ENCODE measurements at regions of chr16 and their contacts with region 1.

Region 1: DNA sequence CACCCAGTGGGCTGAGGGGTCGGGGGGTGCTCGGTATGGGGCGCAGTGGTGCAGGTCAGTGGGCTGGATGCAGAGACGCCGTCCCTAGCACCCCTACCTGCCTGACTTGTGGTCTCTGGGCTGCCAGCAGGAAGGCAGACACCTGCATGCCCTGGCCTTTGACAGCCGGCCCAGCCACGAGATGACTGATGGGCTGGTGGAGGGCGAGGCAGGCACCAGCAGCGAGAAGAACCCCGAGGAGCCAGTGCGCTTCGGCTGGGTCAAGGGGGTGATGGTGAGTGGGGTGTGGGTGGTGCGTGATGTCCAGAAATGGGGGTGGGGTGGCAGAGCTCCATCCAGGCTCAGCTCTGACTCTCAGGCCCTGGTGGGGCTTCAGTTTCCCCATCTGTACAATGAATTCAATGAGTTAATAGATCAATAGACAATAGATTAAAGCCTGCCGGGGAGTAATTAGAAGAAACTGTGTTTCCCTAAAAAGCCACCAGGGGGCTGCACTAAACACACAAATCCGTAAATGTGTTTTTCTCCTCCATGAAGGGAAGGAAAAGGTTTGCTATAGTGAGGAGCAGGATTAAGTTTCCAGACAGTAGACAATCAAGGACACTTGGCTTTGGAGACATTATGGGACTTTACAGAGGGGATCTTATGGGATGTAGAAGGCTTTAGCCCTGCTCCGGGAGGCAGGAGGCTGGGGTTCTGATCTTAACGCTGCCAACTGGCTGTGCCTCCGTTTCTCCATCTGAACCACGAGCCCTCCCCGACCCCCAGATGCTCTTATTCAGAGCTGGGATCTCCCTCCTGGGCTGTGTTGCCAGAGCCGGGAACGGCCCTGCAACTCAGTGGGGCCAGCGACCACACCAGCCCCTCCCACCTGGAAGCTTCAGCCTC is 2.2 kb downstream of the SLC12A3 start:
- DNase-seq: peak; percentile 80
- H3K4me3 ChIP-seq: no peak overlapping the region
- H3K27ac ChIP-seq: no peak overlapping the region
- H3K4me1 ChIP-seq: 0 out of 2 replicates have a peak, but pooled peaks cover 4% of the 10 kb centered on the region
- H3K27me3 ChIP-seq: no peaks in the 10 kb centered on the region

Region 2: DNA sequence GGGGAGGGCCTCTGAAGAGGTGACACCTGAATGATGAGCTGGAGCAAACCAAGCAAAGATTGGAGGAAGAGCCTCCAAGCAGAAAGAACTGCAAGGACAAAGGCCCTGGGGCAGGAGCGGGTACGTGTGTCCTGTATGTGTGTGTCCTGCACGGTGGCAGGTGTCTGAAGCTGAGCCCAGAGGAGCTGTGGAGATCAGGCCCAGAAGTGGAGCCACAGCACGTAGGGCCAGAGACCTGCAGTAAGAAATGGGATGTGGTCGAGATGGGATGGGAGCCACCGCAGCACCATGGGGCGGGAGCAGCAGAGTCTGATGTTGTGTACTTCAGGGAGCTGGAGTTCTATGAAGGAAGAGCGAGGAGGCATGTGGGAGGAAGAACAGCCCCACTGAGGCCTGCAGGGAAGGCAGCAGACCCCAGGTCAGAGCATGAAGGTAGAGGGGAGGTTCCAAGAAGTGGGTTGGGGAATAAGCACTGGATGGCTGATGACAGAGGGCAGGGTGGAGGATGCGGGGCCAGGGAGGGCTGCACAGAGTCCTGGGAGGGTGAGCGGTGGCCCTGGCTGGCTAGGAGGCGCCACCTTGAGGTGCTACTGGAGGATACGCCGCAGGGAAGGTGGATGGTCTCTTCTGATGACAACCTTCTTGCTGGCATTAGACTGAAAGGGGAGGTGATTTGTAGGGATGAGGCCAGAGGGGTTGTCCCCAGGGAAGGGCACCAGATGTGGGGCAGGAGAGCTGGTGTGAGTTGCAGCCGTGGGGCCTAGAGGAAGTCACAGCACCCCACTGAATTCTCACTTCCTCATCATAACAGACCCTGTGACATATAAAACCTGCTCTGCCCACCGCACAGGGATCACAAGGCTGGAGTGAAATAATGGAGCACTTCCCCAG is 83.9 kb after region 1 on chr16:
- in situ Hi-C with region 1: loop called (anchors 10 kb)
- DNase-seq: peak; percentile 83
- H3K4me3 ChIP-seq: no peak overlapping the region
- H3K27ac ChIP-seq: no peak overlapping the region
- H3K4me1 ChIP-seq: no peaks in the 10 kb centered on the region
- H3K27me3 ChIP-seq: no peaks in the 10 kb centered on the region

Region 3: GRCh38 chr16:57039148-57039812 is 172.1 kb after region 1 on chr16:
- in situ Hi-C with region 1: loop called (anchors 10 kb)
- DNase-seq: peak; percentile 58
- H3K4me3 ChIP-seq: no peak overlapping the region
- H3K27ac ChIP-seq: peak overlapping the region; percentile 41
- H3K4me1 ChIP-seq: peaks cover 25% of the 10 kb centered on the region
- H3K27me3 ChIP-seq: no peaks in the 10 kb centered on the region

Region 4: GRCh38 chr16:57049678-57050077 is 182.5 kb after region 1 on chr16:
- in situ Hi-C with region 1: no loop called
- DNase-seq: no peak
- H3K4me3 ChIP-seq: no peak overlapping the region
- H3K27ac ChIP-seq: no peak overlapping the region
- H3K4me1 ChIP-seq: no peaks in the 10 kb centered on the region
- H3K27me3 ChIP-seq: no peaks in the 10 kb centered on the region

Region 5: DNA sequence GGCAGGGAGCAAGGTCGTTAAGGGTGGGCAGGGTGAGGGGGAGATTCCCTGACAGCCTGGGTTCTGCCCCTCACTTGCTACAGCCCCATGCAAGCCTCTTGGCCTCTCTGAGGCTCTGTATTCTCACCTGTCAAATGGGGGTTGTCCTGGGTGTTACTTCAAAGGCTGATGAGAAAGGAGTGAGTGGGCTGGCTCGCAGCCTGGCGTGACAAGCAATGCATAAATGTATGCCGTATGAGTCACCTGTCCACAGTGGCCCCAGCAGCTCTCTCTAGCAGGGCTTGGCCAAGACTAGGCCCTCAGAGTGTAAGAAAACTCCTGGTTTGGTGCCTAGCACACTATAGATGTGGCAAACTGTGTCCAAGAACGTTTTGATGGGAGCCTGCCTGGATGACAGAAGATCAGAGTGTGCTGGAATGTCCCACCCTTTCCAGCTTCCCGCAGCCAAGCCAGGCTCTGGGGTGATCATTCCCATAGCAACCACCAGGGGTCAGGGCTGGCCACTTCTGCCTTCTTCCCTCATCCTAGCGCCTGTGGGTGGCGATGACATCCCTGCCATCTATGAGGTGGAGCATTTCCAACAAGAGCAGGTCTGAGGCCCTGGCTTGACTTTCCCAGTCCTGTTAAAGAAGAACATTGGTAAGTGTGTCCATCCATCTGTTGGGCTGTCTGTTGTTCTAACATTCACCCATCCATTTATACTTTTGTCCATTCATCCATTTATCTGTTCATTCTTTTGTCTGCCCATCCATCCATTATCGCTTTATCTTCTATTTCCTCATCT is 724.1 kb after region 1 on chr16:
- in situ Hi-C with region 1: no loop called
- DNase-seq: peak; percentile 94
- H3K4me3 ChIP-seq: peak overlapping the region; percentile 39
- H3K27ac ChIP-seq: peak overlapping the region; percentile 84
- H3K4me1 ChIP-seq: peaks cover 20% of the 10 kb centered on the region
- H3K27me3 ChIP-seq: no peaks in the 10 kb centered on the region

Measured in GM23248 (cell line).